ENCODE measurements at regions of chr10 and their contacts with region 1.

Region 1: GRCh38 chr10:8404391-8405120 is 350.1 kb downstream of the GATA3 start:
- DNase-seq: peak; percentile 82
- ATAC-seq: peak; percentile 64
- H3K4me3 Mint-ChIP-seq: peak overlapping the region; percentile 74
- H3K27ac Mint-ChIP-seq: peak overlapping the region; percentile 83
- H3K4me1 Mint-ChIP-seq: peaks cover 80% of the 10 kb centered on the region
- H3K27me3 Mint-ChIP-seq: no peaks in the 10 kb centered on the region

Region 2: DNA sequence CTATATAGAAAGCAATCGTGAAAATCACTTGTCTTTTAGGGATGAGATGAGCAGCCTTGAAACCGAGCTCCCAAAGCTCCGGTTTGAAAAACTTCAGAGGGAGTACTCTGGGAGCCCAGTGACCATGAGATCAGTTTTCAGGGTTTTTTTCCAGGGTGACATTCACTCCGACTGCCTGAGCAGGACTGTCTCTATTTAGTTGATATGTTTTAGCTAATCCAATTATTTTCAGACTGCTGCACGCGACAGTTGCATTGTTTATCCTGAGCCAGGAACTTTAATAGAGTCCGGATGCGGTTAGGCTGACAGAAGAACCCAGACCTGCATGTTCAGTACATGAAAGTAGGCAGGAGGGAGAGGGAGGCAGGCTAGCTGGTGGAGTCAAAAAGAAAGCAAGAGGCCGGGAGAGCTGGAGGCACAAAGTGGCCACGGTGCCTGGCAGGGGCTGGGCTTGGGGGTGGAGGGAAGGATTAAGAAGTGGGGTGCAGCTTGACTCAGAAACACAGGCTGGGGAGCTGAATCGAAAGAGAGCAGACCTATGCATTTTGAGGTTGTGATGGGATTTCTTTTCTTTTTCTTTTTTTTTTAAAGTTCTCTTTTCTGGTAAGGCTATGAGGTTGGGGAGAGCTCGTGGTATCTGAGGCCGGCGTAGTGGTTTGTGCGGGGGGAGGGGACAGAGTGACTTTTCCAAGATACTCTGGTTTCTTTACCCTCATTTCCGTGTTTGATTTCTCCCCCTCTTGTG is 344.4 kb before region 1 on chr10:
- CTCF ChIA-PET with region 1: interaction called, 8 read pairs
- POLR2A ChIA-PET with region 1: interaction called, 12 read pairs
- DNase-seq: peak; percentile 85
- ATAC-seq: peak; percentile 50
- H3K4me3 Mint-ChIP-seq: peak overlapping the region; percentile 97
- H3K27ac Mint-ChIP-seq: peak overlapping the region; percentile 97
- H3K4me1 Mint-ChIP-seq: peaks cover 77% of the 10 kb centered on the region
- H3K27me3 Mint-ChIP-seq: no peaks in the 10 kb centered on the region

Region 3: DNA sequence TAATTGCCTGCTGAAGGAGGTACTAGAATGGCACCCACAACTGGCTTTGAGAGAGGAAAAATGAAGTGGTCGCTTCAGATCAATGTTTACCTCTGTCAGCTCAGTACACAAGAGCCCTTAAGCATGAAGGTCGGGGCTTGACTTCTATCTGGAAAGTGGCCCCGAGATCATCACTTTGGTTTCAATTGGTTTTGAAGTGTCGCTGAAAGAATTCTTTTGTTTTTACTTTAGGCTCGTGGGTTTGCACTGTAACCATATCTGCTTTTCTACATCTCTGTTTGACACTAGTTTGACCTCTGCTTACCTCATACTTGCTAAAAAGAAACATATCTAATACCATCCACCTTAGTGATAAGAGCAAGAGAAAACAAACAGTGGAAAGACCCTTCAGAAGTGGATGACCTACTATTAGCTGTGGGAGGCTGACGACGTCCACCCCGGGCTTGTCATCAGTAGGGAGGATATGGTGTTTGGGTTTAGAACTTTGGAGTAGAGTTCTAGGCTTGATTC is 11.7 kb after region 1 on chr10:
- CTCF ChIA-PET with region 1: interaction called, 8 read pairs
- POLR2A ChIA-PET with region 1: interaction called, 14 read pairs
- DNase-seq: peak; percentile 50
- ATAC-seq: peak; percentile 90
- H3K4me3 Mint-ChIP-seq: no peak overlapping the region
- H3K27ac Mint-ChIP-seq: peak overlapping the region; percentile 69
- H3K4me1 Mint-ChIP-seq: peaks cover 45% of the 10 kb centered on the region
- H3K27me3 Mint-ChIP-seq: peaks cover 4% of the 10 kb centered on the region

Region 4: GRCh38 chr10:8444630-8445029 is 40.1 kb after region 1 on chr10:
- CTCF ChIA-PET with region 1: interaction called, 11 read pairs
- POLR2A ChIA-PET with region 1: interaction called, 3 read pairs
- DNase-seq: peak; percentile 71
- ATAC-seq: peak; percentile 97
- H3K4me3 Mint-ChIP-seq: no peak overlapping the region
- H3K27ac Mint-ChIP-seq: no peak overlapping the region
- H3K4me1 Mint-ChIP-seq: peaks cover 13% of the 10 kb centered on the region
- H3K27me3 Mint-ChIP-seq: peaks cover 13% of the 10 kb centered on the region